ENCODE measurements at regions of chr4 and their contacts with region 1.

Region 1: GRCh38 chr4:15405018-15405417 is 22.8 kb upstream of the C1QTNF7 start:
- DNase-seq: no peak
- ATAC-seq: peak in 2 of 8 donors; percentile 8 to 52
- H3K4me3 ChIP-seq: no peak overlapping the region
- H3K27ac ChIP-seq: no peak overlapping the region
- H3K4me1 ChIP-seq: peaks cover 0 to 35% (median 22%) of the 10 kb centered on the region in 9 donors
- H3K27me3 ChIP-seq: no peaks in the 10 kb centered on the region
- CTCF ChIP-seq: no peak

Region 2: DNA sequence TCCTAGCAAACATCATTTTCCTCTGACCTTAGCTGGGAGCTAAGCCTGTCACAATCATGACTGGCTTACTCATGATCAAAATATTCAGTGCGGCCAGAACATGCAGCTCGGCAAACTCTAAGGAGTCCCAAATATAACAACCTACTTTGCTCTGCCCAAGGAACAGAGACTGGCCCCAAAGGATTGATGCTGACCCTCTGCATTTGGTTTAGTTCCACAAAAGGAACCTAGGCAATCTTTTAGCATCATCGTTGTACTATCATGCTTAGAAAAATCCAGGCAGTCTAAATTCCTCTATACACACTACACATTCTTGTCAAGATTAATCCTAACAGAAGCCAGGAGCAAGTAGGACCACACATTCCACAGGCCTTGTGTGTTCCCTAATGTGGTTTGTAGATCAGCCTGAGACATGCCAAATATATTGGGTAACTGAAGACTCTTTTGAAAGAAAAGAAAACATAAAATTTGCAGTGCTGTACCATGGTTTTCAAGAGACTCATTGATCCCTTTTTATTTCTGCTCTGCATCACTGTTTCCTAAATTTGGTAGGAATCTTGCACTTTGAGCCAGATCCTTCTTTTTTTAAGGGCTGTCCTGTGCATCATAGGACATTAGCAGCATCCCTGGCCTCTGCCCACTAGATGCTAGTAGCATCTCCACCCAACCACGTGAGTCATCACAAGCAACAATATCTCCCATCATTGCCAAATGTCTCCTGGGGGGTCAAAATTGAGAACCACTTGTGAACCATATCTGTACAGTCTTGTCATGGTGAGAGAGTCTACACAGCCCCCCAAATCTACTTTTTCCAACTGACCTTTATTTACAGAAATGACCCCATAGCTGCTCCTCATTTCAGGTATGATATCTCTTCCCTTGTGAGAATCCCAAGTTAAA is 47.1 kb after region 1 on chr4:
- intact Hi-C with region 1: loop called in 2 of 10 experiments (anchors 5 kb)
- DNase-seq: no peak
- ATAC-seq: peak in 7 of 8 donors; percentile 69 to 86 (median 79)
- H3K4me3 ChIP-seq: no peak overlapping the region
- H3K27ac ChIP-seq: peak overlapping the region in 5 of 10 donors; percentile 5 to 63 (median 43)
- H3K4me1 ChIP-seq: peaks cover 10 to 39% (median 24%) of the 10 kb centered on the region in 9 donors
- H3K27me3 ChIP-seq: no peaks in the 10 kb centered on the region
- CTCF ChIP-seq: no peak

Measured in heart right ventricle (tissue), 16 donors.